HepG2 (cell line): ENCODE measurements at regions of chr6 and their contacts with region 1.

Region 1: DNA sequence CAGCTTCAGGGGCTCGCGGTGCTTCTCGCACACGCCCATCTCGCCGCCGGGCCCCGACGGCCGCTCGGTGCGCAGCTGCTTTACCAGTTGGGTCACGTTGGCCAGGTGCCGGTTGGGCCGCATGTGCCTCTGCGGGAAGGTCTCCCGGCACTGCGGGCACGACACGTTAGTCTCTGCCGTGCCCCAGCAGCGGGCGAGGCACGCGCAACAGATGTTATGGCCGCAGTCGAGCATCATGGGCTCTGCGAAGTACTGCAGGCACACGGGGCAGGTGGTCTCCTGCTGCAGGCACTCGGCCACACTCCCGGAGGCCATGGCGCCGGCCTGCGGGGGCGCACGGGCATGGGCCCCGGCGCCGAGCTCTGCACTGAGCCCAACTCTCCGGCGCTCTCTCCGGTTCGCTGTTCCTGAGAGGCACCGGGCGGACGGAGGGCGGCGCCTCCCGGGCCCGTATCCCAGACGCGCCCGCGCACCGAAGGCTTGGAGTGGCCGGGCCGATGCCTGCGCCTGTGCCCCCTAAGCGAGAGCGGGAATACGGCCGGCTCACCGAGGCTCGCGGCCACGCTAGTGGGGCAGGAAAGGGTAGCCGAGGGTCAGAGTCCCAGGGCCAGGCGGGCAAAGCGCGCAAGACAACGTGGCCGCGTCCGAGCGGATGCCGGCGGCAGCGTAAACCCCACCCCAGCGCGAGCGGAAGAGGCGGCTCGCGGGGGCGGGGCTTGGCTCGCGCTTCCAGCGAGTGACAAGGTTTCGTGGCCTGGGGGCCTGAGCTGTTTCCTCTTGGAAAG is at the start of gene TRIM27:
- DNase-seq: peak; percentile 88
- ATAC-seq: peak; percentile 92
- H3K4me3 ChIP-seq: peak within 1 kb of the TSS; percentile 76 to 95 (median 92)
- H3K27ac ChIP-seq: peak within 1 kb of the TSS; percentile 92
- H3K4me1 ChIP-seq: peaks cover 45% of the 10 kb centered on the region
- H3K27me3 ChIP-seq: no peaks in the 10 kb centered on the region; a peak in 1 of 5 replicates
- CTCF ChIP-seq: 0 out of 2 replicates have a peak, but pooled peaks have one; percentile 31
- EP300 ChIP-seq: peak in 1 of 2 experiments; percentile 37; a peak in 1 of 4 replicates
- POLR2A ChIP-seq: peak; percentile 91 to 98
- RAD21 ChIP-seq: peak; percentile 43
- total RNA-seq, gene TRIM27: 79.0 and 88.6 TPM in 2 replicates

Region 2: GRCh38 chr6:27838058-27838944 is 1085.2 kb before region 1 on chr6:
- CTCF ChIA-PET with region 1: no interaction called
- POLR2A ChIA-PET with region 1: interaction called, 14 read pairs
- in situ Hi-C with region 1: no loop called
- intact Hi-C with region 1: no loop called
- DNase-seq: peak; percentile 100
- ATAC-seq: peak; percentile 87
- H3K4me3 ChIP-seq: peak overlapping the region; percentile 79 to 84 (median 83)
- H3K27ac ChIP-seq: peak overlapping the region; percentile 92
- H3K4me1 ChIP-seq: peaks cover 34% of the 10 kb centered on the region
- H3K27me3 ChIP-seq: no peaks in the 10 kb centered on the region; a peak in 1 of 5 replicates
- CTCF ChIP-seq: no peak
- EP300 ChIP-seq: 0 out of 4 replicates have a peak, but pooled peaks of 1 of the 2 experiments have one; percentile 6
- POLR2A ChIP-seq: peak; percentile 82 to 99
- RAD21 ChIP-seq: no peak; the same call in 1 of the 2 replicates

Region 3: DNA sequence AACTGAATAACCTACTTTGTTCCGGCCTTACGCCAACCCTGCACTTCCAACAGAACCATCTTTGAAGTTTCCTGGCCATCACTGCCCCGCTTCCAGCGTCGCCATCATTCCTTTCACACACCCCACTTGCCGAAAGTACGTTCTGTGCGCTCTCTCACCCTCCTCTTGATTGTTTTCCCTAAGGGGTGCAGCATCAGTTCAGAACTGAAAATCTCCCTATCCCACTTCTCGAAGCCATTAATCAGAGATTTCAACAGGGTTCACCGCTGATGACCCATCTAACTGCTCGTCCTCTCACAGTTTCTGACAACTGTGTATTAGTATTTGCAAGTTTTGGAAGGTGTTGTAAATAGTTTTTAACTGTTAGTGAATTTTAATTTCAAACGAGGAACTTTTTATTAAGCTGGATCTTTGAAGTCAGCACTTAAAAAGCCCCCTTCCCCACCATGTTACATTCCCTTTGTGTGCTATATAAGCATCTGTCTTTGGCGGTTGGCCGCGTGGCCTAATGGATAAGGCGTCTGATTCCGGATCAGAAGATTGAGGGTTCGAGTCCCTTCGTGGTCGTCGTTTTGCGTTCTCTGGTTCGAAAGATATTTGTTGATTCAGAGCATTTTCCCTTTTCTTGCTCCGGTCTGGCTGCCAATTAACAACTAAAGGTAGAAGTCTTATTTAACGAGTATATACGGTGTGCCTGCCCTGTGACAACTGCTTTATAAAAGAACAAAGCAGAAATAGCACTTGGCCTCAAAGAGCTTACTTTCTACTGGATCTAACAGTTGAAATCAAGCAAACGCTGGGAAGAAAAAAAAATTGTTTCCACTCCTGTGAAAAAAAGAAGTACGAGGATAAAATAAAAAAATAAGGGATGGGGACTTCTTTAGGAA is 42.4 kb before region 1 on chr6:
- CTCF ChIA-PET with region 1: no interaction called
- POLR2A ChIA-PET with region 1: interaction called, 13 read pairs
- in situ Hi-C with region 1: no loop called
- intact Hi-C with region 1: no loop called
- DNase-seq: peak; percentile 82
- ATAC-seq: peak; percentile 27
- H3K4me3 ChIP-seq: peak overlapping the region; percentile 38 to 63 (median 59)
- H3K27ac ChIP-seq: no peak overlapping the region
- H3K4me1 ChIP-seq: peaks cover 62% of the 10 kb centered on the region
- H3K27me3 ChIP-seq: no peaks in the 10 kb centered on the region
- CTCF ChIP-seq: no peak
- EP300 ChIP-seq: no peak
- POLR2A ChIP-seq: no peak
- RAD21 ChIP-seq: no peak

Region 4: DNA sequence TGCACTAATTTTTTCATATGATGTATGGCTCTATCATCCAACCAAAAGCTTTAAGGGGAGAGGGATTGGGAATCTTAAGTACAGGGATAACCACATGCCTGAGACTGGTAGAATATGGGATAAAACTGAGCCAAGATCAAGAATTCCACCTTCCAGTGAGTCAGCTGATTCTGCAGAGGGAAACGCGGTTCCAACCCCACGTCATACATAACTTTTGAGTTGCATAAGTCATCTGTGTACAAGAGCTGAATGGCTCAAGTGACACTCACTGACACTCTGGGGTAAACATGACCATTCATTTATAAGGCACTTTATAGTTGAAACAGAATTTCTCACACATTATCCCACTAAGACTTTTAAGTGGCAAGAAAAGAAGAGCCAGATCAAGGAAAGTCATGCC is 16.1 kb before region 1 on chr6:
- CTCF ChIA-PET with region 1: no interaction called
- POLR2A ChIA-PET with region 1: interaction called, 48 read pairs
- in situ Hi-C with region 1: no loop called
- intact Hi-C with region 1: no loop called
- DNase-seq: no peak
- ATAC-seq: no peak
- H3K4me3 ChIP-seq: no peak overlapping the region
- H3K27ac ChIP-seq: no peak overlapping the region
- H3K4me1 ChIP-seq: no peaks in the 10 kb centered on the region
- H3K27me3 ChIP-seq: no peaks in the 10 kb centered on the region
- CTCF ChIP-seq: no peak
- EP300 ChIP-seq: no peak
- POLR2A ChIP-seq: no peak
- RAD21 ChIP-seq: no peak

Region 5: GRCh38 chr6:28947831-28948270 is 24.3 kb after region 1 on chr6:
- CTCF ChIA-PET with region 1: no interaction called
- POLR2A ChIA-PET with region 1: interaction called, 17 read pairs
- in situ Hi-C with region 1: no loop called
- intact Hi-C with region 1: no loop called
- DNase-seq: peak; percentile 94
- ATAC-seq: peak; percentile 86
- H3K4me3 ChIP-seq: peak overlapping the region in 2 of 3 experiments; percentile 16 to 23; a peak in 2 of 6 replicates
- H3K27ac ChIP-seq: peak overlapping the region; percentile 54
- H3K4me1 ChIP-seq: peaks cover 73% of the 10 kb centered on the region
- H3K27me3 ChIP-seq: peaks cover 0 to 3% of the 10 kb centered on the region in 2 experiments; a peak in 1 of 5 replicates
- CTCF ChIP-seq: no peak
- EP300 ChIP-seq: peak in 1 of 2 experiments; percentile 26; a peak in 2 of 4 replicates
- POLR2A ChIP-seq: no peak
- RAD21 ChIP-seq: no peak

Region 6: GRCh38 chr6:29016559-29017427 is 93.3 kb after region 1 on chr6:
- CTCF ChIA-PET with region 1: no interaction called
- POLR2A ChIA-PET with region 1: interaction called, 11 read pairs
- in situ Hi-C with region 1: no loop called
- intact Hi-C with region 1: no loop called
- DNase-seq: peak; percentile 80
- ATAC-seq: peak; percentile 90
- H3K4me3 ChIP-seq: peak overlapping the region; percentile 67 to 82 (median 70)
- H3K27ac ChIP-seq: peak overlapping the region; percentile 15
- H3K4me1 ChIP-seq: peaks cover 22% of the 10 kb centered on the region
- H3K27me3 ChIP-seq: no peaks in the 10 kb centered on the region; a peak in 2 of 5 replicates
- CTCF ChIP-seq: peak; percentile 82
- EP300 ChIP-seq: no peak
- POLR2A ChIP-seq: no peak
- RAD21 ChIP-seq: peak; percentile 81

Region 7: GRCh38 chr6:29414588-29414987 is 491.1 kb after region 1 on chr6 and contains the start of gene OR12D1:
- CTCF ChIA-PET with region 1: no interaction called
- POLR2A ChIA-PET with region 1: no interaction called
- in situ Hi-C with region 1: no loop called
- intact Hi-C with region 1: no loop called
- DNase-seq: peak; percentile 10
- ATAC-seq: no peak
- H3K4me3 ChIP-seq: no peak within 1 kb of the TSS
- H3K27ac ChIP-seq: no peak within 1 kb of the TSS
- H3K4me1 ChIP-seq: no peaks in the 10 kb centered on the region
- H3K27me3 ChIP-seq: no peaks in the 10 kb centered on the region
- CTCF ChIP-seq: peak; percentile 24; the same call in 1 of the 2 replicates
- EP300 ChIP-seq: no peak
- POLR2A ChIP-seq: no peak
- RAD21 ChIP-seq: no peak
- total RNA-seq, gene OR12D1: not detected in 2 replicates